ENCODE measurements at regions of chr1 and their contacts with region 1.

Region 1: DNA sequence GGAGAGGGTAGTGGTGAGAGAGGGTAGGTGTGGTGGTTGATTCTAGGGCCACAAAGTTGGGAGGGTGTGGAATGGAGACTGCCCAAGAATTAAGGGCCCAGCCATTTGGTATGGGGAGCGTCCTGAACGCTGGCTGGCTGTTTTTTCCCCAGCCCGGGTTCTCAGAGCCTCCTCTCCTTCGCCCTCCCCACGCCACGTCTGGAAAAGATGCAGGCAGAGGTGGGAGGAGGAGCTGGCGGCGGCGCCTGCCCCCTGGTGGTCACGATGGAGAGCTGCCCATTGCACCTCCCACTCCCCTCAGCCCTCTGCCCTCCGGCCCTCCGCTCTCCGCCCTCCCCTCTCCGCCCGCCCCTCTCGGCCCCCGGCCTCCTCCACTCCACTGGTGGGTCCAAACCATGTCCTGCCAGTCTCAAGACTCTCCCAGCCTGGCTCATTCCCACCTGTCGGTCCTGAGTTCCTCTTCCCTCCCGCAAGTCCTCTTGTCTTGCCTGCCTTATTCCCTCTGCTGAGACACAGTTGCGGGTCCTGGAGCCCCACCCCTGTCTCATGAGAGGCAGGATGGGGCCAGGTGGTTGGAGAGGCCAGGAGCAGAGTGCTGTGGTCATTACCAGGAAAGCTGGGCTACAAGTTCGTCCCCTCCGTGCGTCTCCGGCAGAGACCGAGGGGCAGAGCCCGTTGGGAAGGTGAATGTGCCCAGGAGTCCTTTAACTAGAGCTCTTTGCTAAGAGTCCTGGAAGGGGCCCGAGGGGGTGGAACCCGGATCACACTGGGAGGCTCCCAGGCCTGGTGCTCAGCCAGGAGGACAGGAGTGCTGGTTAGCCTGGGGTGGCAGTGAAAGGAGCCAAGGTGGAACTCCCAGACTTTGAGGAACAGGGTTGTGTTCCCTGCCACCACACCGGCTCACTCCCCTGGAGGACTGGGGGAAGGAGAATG is 22.6 kb downstream of the ETNK2 start:
- DNase-seq: peak; percentile 46 to 69 (median 58)
- H3K4me3 ChIP-seq: no peak overlapping the region
- H3K4me3 Mint-ChIP-seq: peak overlapping the region in 2 of 7 donors; percentile 26 to 41
- H3K27ac ChIP-seq: no peak overlapping the region
- H3K27ac Mint-ChIP-seq: peak overlapping the region in 5 of 8 donors; percentile 37 to 87 (median 58)
- H3K4me1 ChIP-seq: peaks cover 4% of the 10 kb centered on the region
- H3K4me1 Mint-ChIP-seq: peaks cover 8 to 13% (median 13%) of the 10 kb centered on the region in 3 donors
- H3K27me3 ChIP-seq: no peaks in the 10 kb centered on the region
- H3K27me3 Mint-ChIP-seq: peaks cover 0 to 2% of the 10 kb centered on the region in 2 donors

Region 2: DNA sequence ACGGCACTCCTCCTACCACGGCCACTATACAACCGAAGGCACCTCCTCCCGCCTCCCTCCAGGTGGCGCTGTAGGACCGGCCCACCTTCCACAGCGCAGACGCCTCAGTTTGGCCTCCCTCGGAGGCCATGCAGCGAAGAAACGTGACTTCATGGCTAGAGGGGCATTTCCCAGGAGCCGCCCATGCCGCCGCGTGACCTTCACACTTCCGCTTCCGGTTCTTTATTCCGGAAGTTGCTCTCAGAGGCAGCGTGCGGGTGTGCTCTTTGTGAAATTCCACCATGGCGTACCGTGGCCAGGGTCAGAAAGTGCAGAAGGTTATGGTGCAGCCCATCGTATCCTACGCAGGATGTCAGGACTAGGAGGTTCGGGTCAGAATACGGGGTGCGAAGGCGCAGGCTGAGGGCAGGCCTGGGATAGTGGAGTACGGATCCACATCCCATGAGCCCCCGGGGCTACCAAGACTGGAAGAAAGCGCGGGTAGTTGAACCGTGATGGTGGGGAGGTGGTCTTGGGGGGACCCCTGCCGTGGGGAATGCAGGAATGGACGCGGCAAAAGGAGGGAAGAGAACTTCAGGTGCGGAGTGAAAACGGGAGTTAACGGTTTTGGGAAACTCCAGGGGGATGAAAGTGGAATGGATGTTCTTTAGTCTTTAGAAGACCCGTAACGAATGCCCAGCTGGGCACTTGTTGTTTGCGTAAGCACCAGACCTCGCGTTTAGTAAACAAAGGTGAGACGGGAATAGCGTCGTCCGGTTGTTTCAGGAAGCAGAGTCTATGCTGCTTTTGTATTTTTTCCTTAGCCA is 267.6 kb before region 1 on chr1 and contains the start of gene SNRPE:
- CTCF ChIA-PET with region 1: interaction called, 24 read pairs
- POLR2A ChIA-PET with region 1: interaction called, 6 read pairs
- DNase-seq: peak; percentile 94 to 98 (median 96)
- H3K4me3 ChIP-seq: peak within 1 kb of the TSS; percentile 96
- H3K4me3 Mint-ChIP-seq: peak within 1 kb of the TSS; percentile 97 to 100 (median 100)
- H3K27ac ChIP-seq: peak within 1 kb of the TSS; percentile 83
- H3K27ac Mint-ChIP-seq: peak within 1 kb of the TSS; percentile 87 to 99 (median 97)
- H3K4me1 ChIP-seq: peaks cover 16% of the 10 kb centered on the region
- H3K4me1 Mint-ChIP-seq: peaks cover 19 to 33% (median 21%) of the 10 kb centered on the region in 3 donors
- H3K27me3 ChIP-seq: no peaks in the 10 kb centered on the region
- H3K27me3 Mint-ChIP-seq: peaks cover 0 to 2% of the 10 kb centered on the region in 2 donors
- total RNA-seq, gene SNRPE: 392 to 421 TPM

Region 3: GRCh38 chr1:203871107-203871875 is 257.9 kb before region 1 on chr1:
- CTCF ChIA-PET with region 1: interaction called, 24 read pairs
- POLR2A ChIA-PET with region 1: no interaction called
- DNase-seq: peak in 1 of 5 donors; percentile 14
- H3K4me3 ChIP-seq: no peak overlapping the region
- H3K4me3 Mint-ChIP-seq: no peak overlapping the region
- H3K27ac ChIP-seq: no peak overlapping the region
- H3K27ac Mint-ChIP-seq: peak overlapping the region in 3 of 8 donors; percentile 14 to 51 (median 25)
- H3K4me1 ChIP-seq: no peaks in the 10 kb centered on the region
- H3K4me1 Mint-ChIP-seq: peaks cover 0 to 2% (median 1%) of the 10 kb centered on the region in 3 donors
- H3K27me3 ChIP-seq: no peaks in the 10 kb centered on the region
- H3K27me3 Mint-ChIP-seq: no peaks in the 10 kb centered on the region